Endothelial cell of umbilical vein (primary cell): ENCODE measurements at regions of chr20 and their contacts with region 1.

Region 1: GRCh38 chr20:58179432-58180099 is 48.9 kb downstream of the ANKRD60 start:
- DNase-seq: peak; percentile 30
- H3K4me3 ChIP-seq: no peak overlapping the region
- H3K27ac ChIP-seq: no peak overlapping the region
- H3K4me1 ChIP-seq: no peaks in the 10 kb centered on the region
- H3K27me3 ChIP-seq: peaks cover 3 to 6% of the 10 kb centered on the region in 2 experiments
- CTCF ChIP-seq: peak; percentile 95 to 97
- POLR2A ChIP-seq: no peak

Region 2: DNA sequence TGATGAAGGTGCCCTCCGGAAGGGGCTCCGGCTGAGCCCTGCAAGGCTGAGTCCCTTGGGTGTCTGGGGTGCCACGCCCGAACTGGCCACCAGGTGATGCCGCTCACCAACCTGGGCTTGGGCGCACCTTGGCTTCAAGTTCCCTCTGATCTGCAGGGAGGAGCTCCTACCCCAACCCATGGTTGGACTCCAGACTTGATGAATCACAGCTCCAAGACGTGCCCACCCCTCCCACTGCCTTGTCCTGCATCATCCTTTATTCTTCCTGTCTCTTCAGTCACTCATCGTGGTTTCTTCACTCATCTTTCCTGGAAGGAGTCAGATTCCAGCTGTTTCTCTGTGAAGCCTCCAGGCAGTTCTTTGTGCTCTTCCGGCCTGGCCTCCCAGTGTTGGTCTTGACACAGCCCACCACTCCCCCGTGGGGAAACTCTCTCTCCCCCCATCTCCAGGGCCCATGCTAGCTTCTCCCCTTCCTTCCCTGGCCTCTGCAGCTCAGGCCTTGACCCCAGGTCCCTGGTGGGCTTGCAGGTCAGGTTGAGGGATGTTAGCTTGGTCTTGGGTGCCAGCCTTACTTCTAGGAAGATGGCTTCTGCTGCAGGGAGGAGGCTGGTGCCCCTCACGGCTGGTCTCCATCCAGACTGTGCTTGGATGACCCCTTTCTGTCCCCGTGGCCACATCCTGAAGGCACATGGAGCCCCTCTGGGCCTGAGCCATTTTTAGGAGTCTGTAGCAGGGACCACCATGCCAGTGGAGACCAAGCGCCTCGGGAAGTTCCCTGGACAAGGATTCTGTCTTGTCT is 556.8 kb before region 1 on chr20:
- CTCF ChIA-PET with region 1: interaction called, 47 read pairs
- POLR2A ChIA-PET with region 1: no interaction called
- dilution Hi-C with region 1: no loop called
- intact Hi-C with region 1: loop called (anchors 1 kb)
- DNase-seq: peak; percentile 58
- H3K4me3 ChIP-seq: no peak overlapping the region
- H3K27ac ChIP-seq: no peak overlapping the region
- H3K4me1 ChIP-seq: peaks cover 7% of the 10 kb centered on the region
- H3K27me3 ChIP-seq: no peaks in the 10 kb centered on the region
- CTCF ChIP-seq: peak; percentile 69 to 92
- POLR2A ChIP-seq: no peak

Region 3: GRCh38 chr20:57628047-57628961 is 551.3 kb before region 1 on chr20:
- CTCF ChIA-PET with region 1: interaction called, 47 read pairs
- POLR2A ChIA-PET with region 1: no interaction called
- dilution Hi-C with region 1: no loop called
- intact Hi-C with region 1: no loop called
- DNase-seq: peak; percentile 86
- H3K4me3 ChIP-seq: no peak overlapping the region
- H3K27ac ChIP-seq: peak overlapping the region; percentile 61
- H3K4me1 ChIP-seq: peaks cover 8% of the 10 kb centered on the region
- H3K27me3 ChIP-seq: peaks cover 6% of the 10 kb centered on the region in 2 experiments
- CTCF ChIP-seq: no peak
- POLR2A ChIP-seq: no peak

Region 4: GRCh38 chr20:58169450-58169849 is 10.1 kb before region 1 on chr20:
- CTCF ChIA-PET with region 1: interaction called, 10 read pairs
- POLR2A ChIA-PET with region 1: no interaction called
- dilution Hi-C with region 1: no loop called
- intact Hi-C with region 1: no loop called
- DNase-seq: no peak
- H3K4me3 ChIP-seq: no peak overlapping the region
- H3K27ac ChIP-seq: no peak overlapping the region
- H3K4me1 ChIP-seq: no peaks in the 10 kb centered on the region
- H3K27me3 ChIP-seq: peaks cover 0 to 4% of the 10 kb centered on the region in 2 experiments
- CTCF ChIP-seq: no peak
- POLR2A ChIP-seq: no peak

Region 5: GRCh38 chr20:58192567-58192966 is 13.0 kb after region 1 on chr20:
- CTCF ChIA-PET with region 1: interaction called, 10 read pairs
- POLR2A ChIA-PET with region 1: no interaction called
- dilution Hi-C with region 1: no loop called
- intact Hi-C with region 1: no loop called
- DNase-seq: peak; percentile 9
- H3K4me3 ChIP-seq: no peak overlapping the region
- H3K27ac ChIP-seq: no peak overlapping the region
- H3K4me1 ChIP-seq: no peaks in the 10 kb centered on the region
- H3K27me3 ChIP-seq: peaks cover 0 to 1% of the 10 kb centered on the region in 2 experiments
- CTCF ChIP-seq: peak; percentile 69 to 75
- POLR2A ChIP-seq: no peak

Region 6: DNA sequence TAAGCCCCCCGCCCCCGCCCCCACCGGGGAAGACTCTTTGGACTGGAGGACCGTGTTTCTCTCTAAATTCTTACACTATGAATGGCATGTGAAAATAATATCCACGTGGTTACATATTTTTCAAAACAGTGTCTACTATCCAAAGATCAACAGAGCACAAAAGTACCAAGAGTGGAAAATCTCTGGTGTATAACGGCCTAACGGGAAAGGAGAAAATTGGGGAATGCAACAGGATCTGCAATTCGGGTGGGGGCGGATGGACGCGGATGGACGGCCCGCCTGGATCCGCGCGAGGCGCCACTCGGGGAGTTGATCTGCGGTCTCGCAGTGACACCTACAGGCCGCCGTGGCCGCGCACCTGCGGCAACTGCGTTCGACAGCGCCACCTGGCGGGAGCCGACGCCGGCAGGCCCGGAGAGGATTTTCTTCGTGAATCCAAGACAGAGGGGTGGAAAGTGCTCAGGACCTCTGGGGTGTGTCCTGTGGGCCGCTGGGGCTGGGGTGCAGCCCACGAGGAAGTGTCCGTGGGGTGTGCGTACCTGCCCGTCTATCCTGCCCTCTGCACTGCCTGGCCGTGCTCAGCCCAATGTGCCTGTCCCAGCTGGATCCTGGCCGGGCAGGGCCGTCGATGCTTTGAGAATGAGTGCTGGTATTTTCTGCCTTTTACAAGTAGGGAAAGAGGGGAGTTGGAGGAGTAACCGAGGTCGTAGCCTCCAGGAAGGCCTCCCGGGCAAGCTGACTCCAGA is 30.3 kb after region 1 on chr20:
- CTCF ChIA-PET with region 1: no interaction called
- POLR2A ChIA-PET with region 1: no interaction called
- dilution Hi-C with region 1: no loop called
- intact Hi-C with region 1: loop called (anchors 1 kb)
- DNase-seq: peak; percentile 70
- H3K4me3 ChIP-seq: no peak overlapping the region
- H3K27ac ChIP-seq: no peak overlapping the region
- H3K4me1 ChIP-seq: no peaks in the 10 kb centered on the region
- H3K27me3 ChIP-seq: no peaks in the 10 kb centered on the region
- CTCF ChIP-seq: peak; percentile 100
- POLR2A ChIP-seq: no peak